Motor neuron (in vitro differentiated cells): ENCODE measurements at regions of chr4 and their contacts with region 1.

Region 1: GRCh38 chr4:53205970-53206369 is 159.9 kb downstream of the SCFD2 start:
- ATAC-seq: no peak
- H3K4me3 ChIP-seq: no peak overlapping the region
- H3K27ac ChIP-seq: no peak overlapping the region
- H3K4me1 ChIP-seq: no peaks in the 10 kb centered on the region

Region 2: GRCh38 chr4:53023677-53024299 is 182.2 kb before region 1 on chr4:
- in situ Hi-C with region 1: no loop called
- ATAC-seq: no peak
- H3K4me3 ChIP-seq: no peak overlapping the region
- H3K27ac ChIP-seq: no peak overlapping the region
- H3K4me1 ChIP-seq: peaks cover 5% of the 10 kb centered on the region in 2 donors

Region 3: DNA sequence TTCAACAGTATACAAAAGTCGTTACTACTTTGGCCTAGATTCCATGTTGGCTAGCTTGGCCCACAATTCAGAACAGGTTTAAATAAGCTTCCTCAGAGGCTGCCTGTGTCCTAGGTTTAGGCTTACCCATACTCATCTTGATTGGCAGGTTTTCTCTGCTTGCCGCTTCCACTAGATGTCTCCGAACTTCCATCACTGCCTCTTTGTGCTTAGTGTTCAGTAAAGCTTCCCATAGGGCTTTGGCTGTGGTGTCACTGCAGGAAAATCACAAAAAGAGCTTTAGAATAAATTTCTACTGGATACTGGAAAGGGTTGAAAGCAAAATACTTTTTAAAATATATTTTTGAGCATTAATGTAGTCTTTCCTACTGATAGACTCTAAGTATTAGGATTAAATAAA is 107.5 kb after region 1 on chr4:
- in situ Hi-C with region 1: loop called in 1 of 9 experiments (anchors 25 kb)
- ATAC-seq: no peak
- H3K4me3 ChIP-seq: no peak overlapping the region
- H3K27ac ChIP-seq: no peak overlapping the region
- H3K4me1 ChIP-seq: no peaks in the 10 kb centered on the region

Region 4: GRCh38 chr4:53365486-53366300 is 159.7 kb after region 1 on chr4 and contains the start of gene SCFD2:
- in situ Hi-C with region 1: loop called in 2 of 9 experiments (anchors 25 kb)
- ATAC-seq: peak; percentile 93 to 99 (median 98)
- H3K4me3 ChIP-seq: peak within 1 kb of the TSS; percentile 57 to 99 (median 90)
- H3K27ac ChIP-seq: peak within 1 kb of the TSS; percentile 82 to 98
- H3K4me1 ChIP-seq: peaks cover 11 to 40% of the 10 kb centered on the region in 2 donors
- total RNA-seq, gene SCFD2: 9.0 to 40.3 (median 21.1) TPM

Region 5: DNA sequence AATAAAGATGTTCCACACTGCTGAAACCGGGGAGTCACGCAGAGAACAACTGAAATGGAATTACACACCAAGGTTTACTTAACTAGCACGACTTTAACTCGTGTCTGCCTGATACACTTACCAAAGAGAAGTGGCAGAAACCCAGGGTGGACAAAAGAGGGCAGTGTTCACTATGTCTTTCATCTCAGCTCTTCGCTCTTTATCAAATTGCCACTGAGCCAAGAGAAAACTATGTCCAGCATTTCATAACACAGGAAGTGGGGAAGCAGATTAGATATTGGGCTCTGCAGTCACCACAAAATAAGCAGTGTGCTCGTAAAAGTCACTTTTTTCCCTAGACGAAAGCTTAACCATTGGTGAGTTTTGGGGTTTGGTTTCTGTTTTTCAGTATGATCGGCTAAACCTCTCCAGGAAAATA is 702.7 kb after region 1 on chr4:
- in situ Hi-C with region 1: loop called in 1 of 9 experiments (anchors 25 kb)
- ATAC-seq: peak; percentile 36 to 87 (median 73)
- H3K4me3 ChIP-seq: no peak overlapping the region
- H3K27ac ChIP-seq: no peak overlapping the region
- H3K4me1 ChIP-seq: peaks cover 0 to 8% of the 10 kb centered on the region in 2 donors